ENCODE measurements at regions of chr1 and their contacts with region 1.

Region 1: DNA sequence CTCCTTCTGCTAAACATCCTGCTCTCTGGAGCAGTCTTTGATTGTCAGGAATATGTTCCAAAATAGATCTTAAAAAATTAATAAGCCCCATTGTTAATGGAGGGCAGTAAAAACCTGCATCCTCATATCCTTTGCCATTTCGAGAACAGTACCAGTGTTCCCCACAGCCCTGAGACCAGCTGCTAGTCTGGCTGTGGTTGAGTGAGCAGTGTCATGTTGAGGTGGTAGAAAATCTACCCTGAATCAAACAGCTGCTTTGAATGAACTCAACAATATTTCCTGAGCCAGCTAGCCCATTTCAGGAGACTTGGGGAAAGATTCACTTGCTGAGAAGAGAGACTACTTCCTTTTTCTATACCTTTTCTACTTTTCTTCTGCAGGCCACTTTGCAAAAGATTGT is 24.4 kb downstream of the FABP3 start:
- DNase-seq: no peak
- H3K4me3 ChIP-seq: no peak overlapping the region
- H3K27ac ChIP-seq: no peak overlapping the region
- H3K4me1 ChIP-seq: no peaks in the 10 kb centered on the region
- H3K27me3 ChIP-seq: no peaks in the 10 kb centered on the region
- CTCF ChIP-seq: no peak
- POLR2A ChIP-seq: no peak

Region 2: GRCh38 chr1:29379443-29380073 is 1968.9 kb before region 1 on chr1:
- intact Hi-C with region 1: loop called (anchors 5 kb)
- DNase-seq: peak in 1 of 2 donors; percentile 31
- H3K4me3 ChIP-seq: no peak overlapping the region
- H3K27ac ChIP-seq: no peak overlapping the region
- H3K4me1 ChIP-seq: no peaks in the 10 kb centered on the region
- H3K27me3 ChIP-seq: peaks cover 4% of the 10 kb centered on the region
- CTCF ChIP-seq: no peak
- POLR2A ChIP-seq: no peak

Region 3: GRCh38 chr1:31422505-31423319 is 74.3 kb after region 1 on chr1:
- intact Hi-C with region 1: no loop called
- DNase-seq: no peak
- H3K4me3 ChIP-seq: no peak overlapping the region
- H3K27ac ChIP-seq: no peak overlapping the region
- H3K4me1 ChIP-seq: no peaks in the 10 kb centered on the region
- H3K27me3 ChIP-seq: no peaks in the 10 kb centered on the region
- CTCF ChIP-seq: peak; percentile 82 to 94 (median 88)
- POLR2A ChIP-seq: no peak